ENCODE measurements at regions of chr1 and their contacts with region 1.

Region 1: GRCh38 chr1:206982216-206982615 is 12.0 kb upstream of the FCAMR start:
- DNase-seq: peak; percentile 79
- ATAC-seq: peak; percentile 82
- H3K4me3 Mint-ChIP-seq: no peak overlapping the region
- H3K27ac Mint-ChIP-seq: no peak overlapping the region
- H3K4me1 Mint-ChIP-seq: no peaks in the 10 kb centered on the region
- H3K27me3 Mint-ChIP-seq: peaks cover 5% of the 10 kb centered on the region
- CTCF ChIP-seq: peak; percentile 78

Region 2: GRCh38 chr1:206808615-206809014 is 173.6 kb before region 1 on chr1:
- CTCF ChIA-PET with region 1: interaction called, 49 read pairs
- POLR2A ChIA-PET with region 1: no interaction called
- intact Hi-C with region 1: no loop called
- DNase-seq: peak; percentile 69
- ATAC-seq: peak; percentile 89
- H3K4me3 Mint-ChIP-seq: no peak overlapping the region
- H3K27ac Mint-ChIP-seq: no peak overlapping the region
- H3K4me1 Mint-ChIP-seq: peaks cover 49% of the 10 kb centered on the region
- H3K27me3 Mint-ChIP-seq: no peaks in the 10 kb centered on the region
- CTCF ChIP-seq: peak; percentile 69

Region 3: DNA sequence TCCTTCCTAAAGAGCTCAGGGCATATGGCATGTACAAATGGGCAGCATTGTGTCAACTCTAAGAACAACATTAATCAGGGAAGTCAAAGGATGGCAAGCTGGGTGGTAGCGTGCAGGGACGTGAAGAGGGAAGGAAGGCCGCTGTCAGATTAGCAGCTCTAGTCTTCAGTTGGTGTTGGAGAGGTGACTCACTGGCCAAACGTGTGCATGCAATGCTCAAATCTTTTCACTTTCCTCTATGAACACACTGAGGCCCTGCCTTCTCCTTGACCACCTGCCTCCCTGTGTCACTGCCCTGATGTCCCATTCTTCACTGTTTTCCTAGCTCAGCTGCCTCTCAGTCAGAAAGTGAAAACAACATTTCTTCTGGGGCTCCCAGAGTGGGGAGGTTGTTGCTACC is 30.0 kb before region 1 on chr1:
- CTCF ChIA-PET with region 1: interaction called, 10 read pairs
- POLR2A ChIA-PET with region 1: interaction called, 3 read pairs
- intact Hi-C with region 1: no loop called
- DNase-seq: no peak
- ATAC-seq: no peak
- H3K4me3 Mint-ChIP-seq: no peak overlapping the region
- H3K27ac Mint-ChIP-seq: no peak overlapping the region
- H3K4me1 Mint-ChIP-seq: peaks cover 14% of the 10 kb centered on the region
- H3K27me3 Mint-ChIP-seq: no peaks in the 10 kb centered on the region
- CTCF ChIP-seq: no peak

Region 4: GRCh38 chr1:207004981-207005830 is 23.0 kb after region 1 on chr1:
- CTCF ChIA-PET with region 1: interaction called, 27 read pairs
- POLR2A ChIA-PET with region 1: no interaction called
- intact Hi-C with region 1: no loop called
- DNase-seq: peak; percentile 62
- ATAC-seq: peak; percentile 47
- H3K4me3 Mint-ChIP-seq: no peak overlapping the region
- H3K27ac Mint-ChIP-seq: no peak overlapping the region
- H3K4me1 Mint-ChIP-seq: no peaks in the 10 kb centered on the region
- H3K27me3 Mint-ChIP-seq: peaks cover 3% of the 10 kb centered on the region
- CTCF ChIP-seq: peak; percentile 74

Region 5: GRCh38 chr1:207077470-207078377 is 95.5 kb after region 1 on chr1:
- CTCF ChIA-PET with region 1: interaction called, 10 read pairs
- POLR2A ChIA-PET with region 1: no interaction called
- intact Hi-C with region 1: no loop called
- DNase-seq: peak; percentile 76
- ATAC-seq: peak; percentile 98
- H3K4me3 Mint-ChIP-seq: no peak overlapping the region
- H3K27ac Mint-ChIP-seq: no peak overlapping the region
- H3K4me1 Mint-ChIP-seq: no peaks in the 10 kb centered on the region
- H3K27me3 Mint-ChIP-seq: no peaks in the 10 kb centered on the region
- CTCF ChIP-seq: peak; percentile 90

Measured in activated CD8-positive, alpha-beta T cell treated with anti-CD3 and anti-CD28 coated beads for 36 hours (primary cell).